GM13977 (cell line): ENCODE measurements at regions of chr9 and their contacts with region 1.

Region 1: GRCh38 chr9:37920471-37921167 is 16.7 kb upstream of the SLC25A51 start:
- DNase-seq: peak; percentile 49
- CTCF ChIP-seq: no peak

Region 2: DNA sequence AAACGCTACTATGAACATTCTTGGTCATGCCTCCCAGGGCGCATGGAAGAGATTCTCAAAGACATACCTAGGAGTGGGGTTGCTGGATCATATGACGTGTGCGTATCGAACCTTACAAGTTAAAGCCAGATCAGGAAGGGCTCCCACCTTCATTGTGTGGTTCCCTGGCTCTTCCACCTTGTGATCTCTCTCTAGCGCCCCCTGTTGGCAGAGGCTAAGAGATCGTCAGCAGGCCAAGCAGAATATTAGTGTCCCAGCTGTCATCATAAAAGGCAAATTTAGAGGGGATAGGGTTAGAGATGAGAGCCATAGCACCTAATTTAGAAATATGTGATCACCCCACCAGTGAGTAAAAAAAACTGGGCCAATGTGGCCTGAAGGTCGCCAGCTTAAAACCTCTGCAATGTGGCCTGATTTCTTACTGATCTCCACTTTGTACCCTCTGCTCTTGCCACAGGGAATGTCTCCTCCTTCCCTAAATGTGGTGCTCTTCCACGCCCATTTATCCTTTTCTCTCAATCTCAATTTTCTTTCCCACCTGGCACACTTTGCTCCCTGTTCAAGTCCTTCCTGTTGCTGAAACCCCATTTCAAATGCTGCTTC is 240.1 kb after region 1 on chr9:
- in situ Hi-C with region 1: loop called (anchors 10 kb)
- DNase-seq: peak; percentile 63
- CTCF ChIP-seq: peak; percentile 90

Region 3: DNA sequence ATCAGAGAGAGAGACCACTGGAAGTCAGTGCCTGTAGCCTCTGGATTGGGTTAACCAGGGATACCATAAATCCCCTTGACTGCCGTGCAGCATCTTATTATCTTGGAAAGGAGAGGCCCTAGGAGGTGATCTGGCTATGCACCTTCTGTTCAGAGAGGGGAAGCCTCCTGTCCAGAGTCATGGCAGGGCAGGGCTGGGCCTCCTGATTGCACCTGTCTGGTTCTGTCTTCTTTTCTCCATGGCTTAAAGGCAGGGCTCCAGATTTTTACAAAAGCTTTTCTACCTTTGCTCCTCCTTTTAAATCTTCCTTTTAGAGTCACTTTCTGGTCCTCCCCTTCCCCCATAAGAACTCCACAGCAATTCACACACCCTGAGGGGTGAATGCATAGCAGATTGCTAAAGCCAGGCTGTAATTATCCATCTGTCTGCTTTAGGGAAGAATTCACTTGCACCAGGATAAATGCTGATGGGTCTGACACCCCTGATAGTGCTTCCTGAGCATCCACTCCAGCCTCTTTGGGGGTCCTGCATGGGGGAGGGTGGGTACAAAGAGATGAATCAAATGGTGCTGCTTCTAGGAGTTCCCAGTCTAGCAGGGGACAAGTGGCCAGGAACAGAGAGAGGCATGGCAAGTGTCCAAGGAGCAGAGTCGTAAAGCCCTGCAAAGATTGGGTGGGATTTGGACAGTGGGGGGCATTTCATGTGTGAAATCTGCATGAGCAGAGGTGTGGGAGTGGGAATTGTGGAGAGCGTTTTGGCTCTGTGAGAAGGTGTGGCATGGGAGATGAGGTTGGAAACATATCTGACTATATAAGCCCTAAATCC is 330.6 kb after region 1 on chr9:
- in situ Hi-C with region 1: no loop called
- DNase-seq: peak; percentile 1
- CTCF ChIP-seq: no peak